ENCODE measurements at regions of chr4 and their contacts with region 1.

Region 1: DNA sequence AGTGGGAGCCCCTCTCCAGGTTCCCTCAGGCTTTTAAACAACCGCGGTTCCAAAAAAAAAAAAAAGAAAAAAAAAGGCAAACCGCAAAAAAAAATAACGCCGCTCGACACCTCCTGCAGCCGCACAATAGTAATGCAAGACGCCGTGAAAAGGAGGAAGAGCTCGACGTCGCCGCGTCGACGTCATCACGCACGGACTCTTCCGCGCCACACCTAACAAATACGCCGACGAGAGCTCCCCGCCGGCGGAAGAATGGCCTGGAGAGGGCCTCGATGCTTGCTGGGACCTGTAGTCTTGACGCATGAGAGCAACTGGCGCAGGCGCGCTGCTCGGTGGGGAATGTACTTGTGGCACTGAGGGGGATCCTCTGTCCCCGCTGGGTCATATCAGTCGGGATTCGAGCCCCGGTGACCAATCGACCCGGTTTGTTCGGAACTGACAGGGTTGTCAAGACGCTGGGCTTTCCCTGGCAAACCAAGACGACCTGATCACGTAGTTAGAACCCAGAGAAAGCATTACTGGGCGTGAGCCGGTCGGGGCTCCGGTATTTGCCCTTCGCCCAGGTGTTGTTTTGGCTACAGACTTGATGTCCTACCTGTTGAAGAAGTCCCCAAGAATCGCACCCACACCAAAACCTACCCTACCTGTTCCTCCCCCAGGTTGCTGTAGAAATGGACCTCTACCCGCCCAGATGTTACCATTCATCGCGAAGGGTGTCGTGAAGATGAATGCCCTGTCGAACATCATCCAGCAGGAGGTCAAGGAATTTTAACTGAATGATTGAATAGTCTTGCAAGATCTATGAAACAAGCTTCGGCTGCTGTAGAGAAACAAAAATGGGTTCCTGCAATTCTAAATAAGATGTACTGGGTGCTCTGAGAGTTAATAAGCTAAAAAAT is at the start of gene CBR4:
- DNase-seq: peak; percentile 86
- ATAC-seq: peak; percentile 96
- H3K4me3 Mint-ChIP-seq: peak within 1 kb of the TSS; percentile 92
- H3K27ac Mint-ChIP-seq: peak within 1 kb of the TSS; percentile 93
- H3K4me1 Mint-ChIP-seq: peaks cover 33% of the 10 kb centered on the region
- H3K27me3 Mint-ChIP-seq: no peaks in the 10 kb centered on the region
- CTCF ChIP-seq: no peak
- total RNA-seq, gene CBR4: 25.7 and 25.8 TPM in 2 replicates

Region 2: GRCh38 chr4:168923526-168924194 is 86.7 kb before region 1 on chr4:
- CTCF ChIA-PET with region 1: interaction called, 3 read pairs
- POLR2A ChIA-PET with region 1: no interaction called
- intact Hi-C with region 1: loop called (anchors 1 kb)
- DNase-seq: no peak
- ATAC-seq: peak; percentile 54
- H3K4me3 Mint-ChIP-seq: no peak overlapping the region
- H3K27ac Mint-ChIP-seq: no peak overlapping the region
- H3K4me1 Mint-ChIP-seq: no peaks in the 10 kb centered on the region
- H3K27me3 Mint-ChIP-seq: no peaks in the 10 kb centered on the region
- CTCF ChIP-seq: peak; percentile 61

Region 3: GRCh38 chr4:169174247-169174646 is 163.9 kb after region 1 on chr4:
- CTCF ChIA-PET with region 1: no interaction called
- POLR2A ChIA-PET with region 1: no interaction called
- intact Hi-C with region 1: no loop called
- DNase-seq: no peak
- ATAC-seq: no peak
- H3K4me3 Mint-ChIP-seq: no peak overlapping the region
- H3K27ac Mint-ChIP-seq: no peak overlapping the region
- H3K4me1 Mint-ChIP-seq: peaks cover 4% of the 10 kb centered on the region
- H3K27me3 Mint-ChIP-seq: no peaks in the 10 kb centered on the region
- CTCF ChIP-seq: no peak

Region 4: GRCh38 chr4:169210504-169211118 is 200.2 kb after region 1 on chr4:
- CTCF ChIA-PET with region 1: no interaction called
- POLR2A ChIA-PET with region 1: interaction called, 28 read pairs
- intact Hi-C with region 1: loop called (anchors 1 kb)
- DNase-seq: no peak
- ATAC-seq: peak; percentile 88
- H3K4me3 Mint-ChIP-seq: peak overlapping the region; percentile 67
- H3K27ac Mint-ChIP-seq: peak overlapping the region; percentile 89
- H3K4me1 Mint-ChIP-seq: peaks cover 53% of the 10 kb centered on the region
- H3K27me3 Mint-ChIP-seq: no peaks in the 10 kb centered on the region
- CTCF ChIP-seq: no peak

Region 5: DNA sequence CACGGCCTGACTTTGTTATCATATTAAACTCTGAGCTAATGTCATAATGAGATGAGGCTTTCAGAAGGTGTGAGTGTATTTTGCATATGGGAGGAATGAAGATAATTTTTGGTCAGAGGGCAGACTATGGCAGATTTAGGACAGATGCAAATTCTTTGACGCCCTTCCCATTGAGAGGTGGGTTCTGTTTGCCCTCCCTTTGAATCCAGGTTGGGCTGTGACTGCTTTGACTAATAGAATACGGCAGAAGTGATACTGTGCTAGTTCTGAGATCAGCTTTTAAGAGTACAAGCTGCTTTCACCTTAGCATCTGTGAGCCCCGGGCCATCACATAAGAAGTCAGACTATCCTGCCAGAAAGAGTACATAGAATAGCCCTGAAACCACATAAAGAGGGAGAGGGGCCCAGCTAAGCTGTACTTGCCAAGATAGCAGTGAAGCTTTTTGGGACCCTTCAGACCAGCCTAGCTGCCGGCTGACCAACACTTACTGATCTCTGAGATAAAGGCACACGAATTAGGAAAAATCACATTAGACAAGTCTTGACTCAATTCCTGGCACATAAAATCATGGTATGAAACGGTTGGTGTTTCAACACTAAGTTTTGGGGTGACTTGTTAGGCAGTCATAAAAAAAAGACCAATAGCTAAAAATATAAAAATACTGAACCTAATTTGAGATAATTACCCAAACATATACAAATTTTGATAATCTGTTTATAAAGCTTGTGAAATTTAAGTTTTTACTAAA is 427.1 kb after region 1 on chr4:
- CTCF ChIA-PET with region 1: no interaction called
- POLR2A ChIA-PET with region 1: interaction called, 8 read pairs
- intact Hi-C with region 1: loop called (anchors 1 kb)
- DNase-seq: no peak
- ATAC-seq: peak; percentile 85
- H3K4me3 Mint-ChIP-seq: peak overlapping the region; percentile 36
- H3K27ac Mint-ChIP-seq: peak overlapping the region; percentile 84
- H3K4me1 Mint-ChIP-seq: peaks cover 39% of the 10 kb centered on the region
- H3K27me3 Mint-ChIP-seq: no peaks in the 10 kb centered on the region
- CTCF ChIP-seq: no peak

Region 6: GRCh38 chr4:169619959-169620879 is 609.8 kb after region 1 on chr4 and contains the start of gene CLCN3:
- CTCF ChIA-PET with region 1: no interaction called
- POLR2A ChIA-PET with region 1: interaction called, 13 read pairs
- intact Hi-C with region 1: loop called (anchors 1 kb)
- DNase-seq: peak; percentile 92
- ATAC-seq: peak; percentile 93
- H3K4me3 Mint-ChIP-seq: peak within 1 kb of the TSS; percentile 100
- H3K27ac Mint-ChIP-seq: peak within 1 kb of the TSS; percentile 99
- H3K4me1 Mint-ChIP-seq: peaks cover 41% of the 10 kb centered on the region
- H3K27me3 Mint-ChIP-seq: no peaks in the 10 kb centered on the region
- CTCF ChIP-seq: no peak
- total RNA-seq, gene CLCN3: 23.0 and 28.6 TPM in 2 replicates

Region 7: DNA sequence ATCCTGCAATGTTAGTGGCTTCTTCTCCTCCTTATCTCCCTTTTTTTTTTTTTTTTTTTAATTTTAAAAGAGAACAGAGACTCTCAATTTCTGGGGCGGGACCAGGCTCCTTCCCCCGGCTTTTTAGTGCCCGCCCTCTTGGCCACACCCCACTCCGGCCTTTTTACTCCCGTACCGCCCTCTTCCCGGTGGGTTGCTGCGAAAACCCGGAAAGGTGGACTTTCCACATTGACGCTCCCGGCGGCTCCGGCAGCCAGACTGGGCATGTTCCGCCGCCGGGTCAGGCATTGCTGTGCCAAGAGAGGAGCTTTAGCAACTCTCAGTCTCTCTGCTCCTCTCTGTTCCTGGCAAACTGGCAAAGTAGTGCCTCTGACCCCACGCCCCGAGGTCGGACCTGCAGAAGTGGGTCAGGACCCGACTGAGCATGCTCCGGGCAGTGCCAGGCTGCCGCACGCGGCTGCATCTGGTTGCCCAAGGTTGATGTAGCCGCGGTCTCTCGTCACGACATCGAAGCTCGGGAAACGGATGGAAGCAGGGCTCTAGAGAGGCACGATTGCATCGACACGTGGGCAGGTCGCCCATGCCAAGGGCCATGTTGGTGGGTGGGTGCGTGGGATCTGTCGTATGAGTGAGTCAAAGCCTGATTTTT is 1016.9 kb after region 1 on chr4:
- CTCF ChIA-PET with region 1: no interaction called
- POLR2A ChIA-PET with region 1: no interaction called
- intact Hi-C with region 1: loop called (anchors 1 kb)
- DNase-seq: peak; percentile 86
- ATAC-seq: peak; percentile 76
- H3K4me3 Mint-ChIP-seq: peak overlapping the region; percentile 89
- H3K27ac Mint-ChIP-seq: peak overlapping the region; percentile 47
- H3K4me1 Mint-ChIP-seq: peaks cover 13% of the 10 kb centered on the region
- H3K27me3 Mint-ChIP-seq: peaks cover 21% of the 10 kb centered on the region
- CTCF ChIP-seq: no peak

Measured in activated B cell treated with CpG ODN at 0.5 μM for 24 hours (primary cell).